Motor neuron (in vitro differentiated cells): ENCODE measurements at regions of chr2 and their contacts with region 1.

Region 1: DNA sequence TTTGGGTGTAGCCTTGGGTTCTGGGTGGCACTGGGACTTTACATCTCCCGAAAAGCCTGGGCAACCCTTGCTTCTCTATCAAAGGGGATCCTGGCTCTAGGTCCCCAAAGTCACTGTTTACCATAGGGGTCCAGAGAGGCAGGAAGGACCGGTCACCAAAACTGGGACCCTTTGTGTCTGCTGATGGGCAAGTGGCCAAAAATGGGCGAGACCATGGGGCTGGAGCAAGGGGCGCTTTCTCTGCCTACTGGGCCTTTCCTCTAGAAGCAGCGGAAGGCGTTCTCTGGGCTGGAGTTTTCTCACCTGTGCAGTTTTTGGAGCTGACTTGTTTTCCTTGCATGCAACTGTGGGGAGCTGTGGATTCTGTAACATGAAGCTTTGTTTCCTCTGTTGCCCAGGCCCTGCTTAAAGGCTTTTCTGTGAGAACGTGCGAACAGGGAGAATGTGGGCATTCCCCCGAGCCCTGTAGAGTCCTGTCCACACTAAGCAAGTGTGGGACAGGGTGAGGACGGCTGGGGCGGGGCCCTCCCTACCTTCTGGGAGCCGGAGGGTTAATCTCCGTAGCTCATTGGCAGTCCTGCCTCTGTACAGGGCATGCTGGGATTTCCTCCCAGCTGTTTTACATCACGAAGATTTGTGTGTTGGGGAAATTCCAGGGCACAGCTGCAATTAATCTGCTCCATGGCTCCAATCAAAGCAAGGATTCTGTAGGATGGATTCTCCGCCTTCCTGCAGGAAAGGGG is 50.2 kb downstream of the TGOLN2 start:
- ATAC-seq: peak; percentile 55 to 93 (median 88)
- H3K4me3 ChIP-seq: no peak overlapping the region
- H3K27ac ChIP-seq: peak overlapping the region in 1 of 2 donors; percentile 30
- H3K4me1 ChIP-seq: peaks cover 17 to 28% of the 10 kb centered on the region in 2 donors

Region 2: GRCh38 chr2:84925724-84926376 is 351.7 kb before region 1 on chr2:
- in situ Hi-C with region 1: loop called in 1 of 9 experiments (anchors 25 kb)
- ATAC-seq: peak; percentile 73 to 93 (median 85)
- H3K4me3 ChIP-seq: peak overlapping the region in 4 of 5 donors; percentile 8 to 38 (median 25)
- H3K27ac ChIP-seq: no peak overlapping the region
- H3K4me1 ChIP-seq: peaks cover 0 to 3% of the 10 kb centered on the region in 2 donors

Region 3: GRCh38 chr2:85066874-85067351 is 210.7 kb before region 1 on chr2:
- in situ Hi-C with region 1: loop called in 4 of 9 experiments (anchors 10 to 25 kb)
- ATAC-seq: peak; percentile 84 to 92 (median 91)
- H3K4me3 ChIP-seq: peak overlapping the region; percentile 4 to 23 (median 8)
- H3K27ac ChIP-seq: no peak overlapping the region
- H3K4me1 ChIP-seq: peaks cover 0 to 5% of the 10 kb centered on the region in 2 donors

Region 4: GRCh38 chr2:85106507-85107215 is 170.9 kb before region 1 on chr2:
- in situ Hi-C with region 1: loop called in 1 of 9 experiments (anchors 25 kb)
- ATAC-seq: peak in 3 of 8 experiments; percentile 55 to 97 (median 66)
- H3K4me3 ChIP-seq: no peak overlapping the region
- H3K27ac ChIP-seq: no peak overlapping the region
- H3K4me1 ChIP-seq: no peaks in the 10 kb centered on the region

Region 5: DNA sequence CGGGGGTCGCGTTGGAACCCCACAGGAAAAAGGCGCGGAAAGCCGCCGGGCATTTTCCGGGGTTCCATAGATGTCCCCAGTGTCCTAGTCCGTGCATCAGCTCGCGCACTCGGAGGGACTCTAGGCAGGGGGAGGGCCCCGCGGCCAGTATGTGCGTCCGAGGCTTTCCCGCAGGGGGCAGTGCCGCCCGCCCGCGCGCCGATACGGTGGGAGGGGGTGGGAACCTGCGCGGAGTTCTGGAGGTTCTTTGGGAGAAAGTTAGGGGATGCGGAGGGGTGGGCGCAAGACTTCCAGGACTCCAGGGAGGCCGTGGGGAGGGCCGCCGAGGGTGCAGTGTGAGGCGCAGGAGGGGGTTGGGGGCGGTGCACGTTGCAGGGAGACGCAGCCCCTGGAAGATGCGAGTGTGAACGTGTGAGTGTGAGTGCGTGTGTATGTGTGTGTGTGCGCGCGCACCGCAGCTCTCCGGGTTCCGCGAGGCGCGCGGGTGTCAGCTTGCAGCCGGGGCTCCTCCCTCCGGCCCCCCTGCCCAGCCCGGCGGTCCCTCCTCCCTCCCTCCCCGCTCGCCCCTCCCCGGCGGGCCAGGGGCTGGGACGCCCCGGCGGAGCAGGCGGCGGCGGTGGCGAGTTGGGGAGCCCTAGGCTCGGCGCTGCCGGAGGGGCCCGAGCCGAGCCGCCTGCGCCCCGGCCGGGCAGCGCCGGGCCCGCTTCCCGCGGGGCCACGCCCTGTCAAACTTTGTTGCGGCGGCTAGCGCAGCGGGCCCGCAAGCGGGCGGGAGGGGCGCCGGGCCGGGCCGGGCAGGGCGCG is 144.6 kb before region 1 on chr2 and contains the start of gene TCF7L1:
- in situ Hi-C with region 1: loop called in 6 of 9 experiments (anchors 10 to 25 kb)
- ATAC-seq: peak; percentile 81 to 91 (median 86)
- H3K4me3 ChIP-seq: peak within 1 kb of the TSS; percentile 42 to 68 (median 48)
- H3K27ac ChIP-seq: peak within 1 kb of the TSS; percentile 17 to 71
- H3K4me1 ChIP-seq: peaks cover 2 to 9% of the 10 kb centered on the region in 2 donors
- total RNA-seq, gene TCF7L1: 1.4 to 10.1 (median 3.4) TPM

Region 6: GRCh38 chr2:85342156-85342555 is 64.6 kb after region 1 on chr2:
- in situ Hi-C with region 1: no loop called
- ATAC-seq: no peak
- H3K4me3 ChIP-seq: no peak overlapping the region
- H3K27ac ChIP-seq: no peak overlapping the region
- H3K4me1 ChIP-seq: no peaks in the 10 kb centered on the region